Activated CD4-positive, alpha-beta T cell treated with anti-CD3 and anti-CD28 coated beads, Interleukin-2, amount 10 ng/mL, durations not matched to agents 7 days and 5 days (primary cell): ENCODE measurements at regions of chr15 and their contacts with region 1.

Region 1: DNA sequence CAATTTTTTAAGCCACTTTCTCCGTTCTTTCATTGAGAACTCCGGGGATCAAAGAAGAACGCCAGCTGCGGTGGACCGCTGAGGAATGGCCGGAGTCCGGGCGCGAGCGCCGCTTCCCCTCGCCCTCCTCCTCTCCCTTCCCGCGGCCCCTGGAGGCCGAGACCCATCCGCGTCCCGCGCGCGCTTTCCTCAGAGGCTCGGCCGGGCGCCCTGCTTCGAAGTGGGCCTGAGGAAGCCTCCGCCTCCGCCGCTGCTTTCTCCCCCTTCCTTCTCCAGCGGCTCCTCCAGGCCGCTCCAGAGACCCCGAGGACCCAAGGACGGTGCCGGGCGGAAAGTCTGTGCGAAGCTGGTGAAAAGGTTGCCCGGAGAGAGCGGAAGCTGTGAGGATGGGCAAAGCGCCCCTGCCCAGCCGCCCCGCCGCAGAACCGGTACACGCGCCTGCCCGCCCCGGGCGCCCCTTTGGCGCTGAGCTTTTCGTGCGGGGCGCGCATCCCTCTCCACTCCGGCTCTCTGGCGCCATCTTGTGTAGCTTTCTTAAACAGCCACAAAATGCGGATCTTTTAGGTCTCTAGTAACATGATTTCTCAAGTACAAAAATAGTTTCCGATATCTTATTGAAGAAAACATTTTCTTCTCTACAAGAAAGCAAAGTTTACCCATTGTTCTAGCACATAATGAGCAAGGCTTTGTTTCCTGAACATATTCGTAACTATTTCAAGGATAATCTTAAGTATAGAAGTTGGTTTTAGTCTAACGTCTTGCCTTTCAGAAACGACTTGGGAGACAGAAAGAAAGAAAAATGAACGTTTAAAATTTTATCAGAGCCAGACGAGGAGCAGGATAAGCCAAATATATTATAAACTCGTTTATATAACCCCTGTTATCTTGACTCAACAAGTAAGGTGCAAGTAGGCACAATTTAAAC is 59.2 kb upstream of the FAM174B start:
- DNase-seq: peak; percentile 78
- H3K4me3 Mint-ChIP-seq: peak overlapping the region; percentile 64
- H3K27ac Mint-ChIP-seq: no peak overlapping the region
- H3K4me1 Mint-ChIP-seq: peaks cover 10% of the 10 kb centered on the region
- H3K27me3 Mint-ChIP-seq: peaks cover 33% of the 10 kb centered on the region

Region 2: DNA sequence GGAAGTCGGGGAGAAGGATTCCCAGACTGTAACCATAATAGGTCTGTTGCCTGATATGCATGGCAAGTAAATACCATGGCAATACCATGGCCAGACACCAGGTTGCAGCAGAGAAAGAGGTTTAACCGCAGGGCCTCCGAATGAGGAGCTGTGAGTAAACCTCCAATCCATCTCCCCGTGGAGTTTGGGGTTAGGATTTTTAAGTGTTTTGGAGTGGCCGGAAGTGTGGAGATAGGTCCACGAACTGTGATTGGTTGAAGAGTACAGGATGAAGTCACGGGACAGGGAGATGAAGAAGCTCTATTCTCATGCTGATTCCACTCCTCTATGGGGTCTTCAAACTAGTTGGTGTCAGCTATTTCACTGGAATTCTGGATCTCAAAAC is 193.1 kb before region 1 on chr15:
- CTCF ChIA-PET with region 1: interaction called, 10 read pairs
- POLR2A ChIA-PET with region 1: interaction called, 5 read pairs
- DNase-seq: peak; percentile 54
- H3K4me3 Mint-ChIP-seq: no peak overlapping the region
- H3K27ac Mint-ChIP-seq: no peak overlapping the region
- H3K4me1 Mint-ChIP-seq: peaks cover 2% of the 10 kb centered on the region
- H3K27me3 Mint-ChIP-seq: peaks cover 2% of the 10 kb centered on the region

Region 3: GRCh38 chr15:92725171-92725570 is 10.4 kb after region 1 on chr15:
- CTCF ChIA-PET with region 1: no interaction called
- POLR2A ChIA-PET with region 1: no interaction called
- DNase-seq: no peak
- H3K4me3 Mint-ChIP-seq: no peak overlapping the region
- H3K27ac Mint-ChIP-seq: no peak overlapping the region
- H3K4me1 Mint-ChIP-seq: peaks cover 6% of the 10 kb centered on the region
- H3K27me3 Mint-ChIP-seq: peaks cover 3% of the 10 kb centered on the region

Region 4: DNA sequence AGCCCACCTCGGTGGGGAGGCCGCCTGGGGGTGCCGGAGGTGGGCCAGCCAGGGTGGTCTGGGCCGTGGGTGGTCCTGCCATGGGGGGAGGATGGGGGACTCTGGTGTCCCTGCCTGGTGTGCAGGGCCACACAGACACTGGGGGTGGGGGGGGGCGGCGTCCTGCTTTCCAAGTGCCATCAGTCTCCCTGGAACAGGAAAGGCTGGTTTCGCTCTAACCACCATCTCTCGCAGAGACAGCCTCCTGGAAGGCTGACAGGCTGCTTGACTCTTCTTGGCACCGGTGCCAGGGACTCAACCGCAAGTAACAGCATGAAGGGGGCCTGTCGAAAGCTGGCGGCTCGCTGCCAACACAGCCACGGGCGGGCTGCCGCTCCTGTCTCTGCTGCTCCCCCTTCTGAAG is 334.0 kb after region 1 on chr15:
- CTCF ChIA-PET with region 1: no interaction called
- POLR2A ChIA-PET with region 1: no interaction called
- DNase-seq: no peak
- H3K4me3 Mint-ChIP-seq: no peak overlapping the region
- H3K27ac Mint-ChIP-seq: no peak overlapping the region
- H3K4me1 Mint-ChIP-seq: peaks cover 22% of the 10 kb centered on the region
- H3K27me3 Mint-ChIP-seq: no peaks in the 10 kb centered on the region